GM12878 (cell line): ENCODE measurements at regions of chr14 and their contacts with region 1.

Region 1: DNA sequence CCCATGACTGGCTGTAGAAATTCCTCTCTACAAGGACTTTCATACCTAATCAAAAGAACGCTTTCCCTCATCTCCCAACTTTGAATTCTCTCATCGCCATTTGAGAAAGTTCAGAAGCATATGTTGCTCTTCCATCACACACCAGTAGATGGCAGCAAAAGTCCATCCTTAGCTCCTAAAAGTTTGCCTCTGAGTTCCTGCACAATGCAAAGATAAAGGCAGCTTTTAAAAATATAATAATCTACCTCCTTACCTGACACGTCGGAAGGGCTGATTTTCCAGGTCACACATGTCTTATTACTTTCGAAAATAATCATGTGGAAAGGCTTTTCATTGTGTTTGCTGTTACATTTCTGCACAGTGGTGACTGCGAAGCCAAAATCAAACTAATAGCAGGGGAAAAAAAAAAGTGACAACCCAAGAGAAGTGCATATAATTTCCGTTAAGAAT is 456.7 kb upstream of the SEL1L start:
- DNase-seq: peak; percentile 16
- ATAC-seq: peak; percentile 69
- H3K4me3 ChIP-seq: no peak overlapping the region
- H3K27ac ChIP-seq: no peak overlapping the region
- H3K4me1 ChIP-seq: no peaks in the 10 kb centered on the region
- H3K27me3 ChIP-seq: no peaks in the 10 kb centered on the region
- CTCF ChIP-seq: peak; percentile 78 to 85 (median 81)
- EP300 ChIP-seq: no peak
- POLR2A ChIP-seq: no peak
- RAD21 ChIP-seq: peak; percentile 95

Region 2: DNA sequence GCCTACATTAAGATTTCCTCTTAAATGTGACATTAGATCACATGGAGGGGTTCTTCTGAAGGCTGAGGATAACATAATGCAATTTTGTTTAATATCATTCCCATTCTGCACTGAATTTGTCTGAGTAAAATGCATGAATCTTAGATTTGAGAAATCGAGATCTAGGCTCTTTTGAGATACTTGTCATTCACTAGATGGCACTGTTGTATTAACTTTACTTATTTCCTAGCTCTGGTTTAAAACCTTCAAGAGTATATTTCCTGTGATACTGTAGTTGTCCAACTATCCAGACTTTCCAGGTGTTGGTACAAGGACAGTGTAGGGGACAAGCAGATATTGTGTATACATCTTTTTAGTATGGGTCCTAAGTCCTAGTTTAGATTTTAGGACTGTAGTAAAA is 365.0 kb before region 1 on chr14:
- CTCF ChIA-PET with region 1: interaction called, 21 read pairs
- POLR2A ChIA-PET with region 1: no interaction called
- RAD21 ChIA-PET with region 1: interaction called, 6 read pairs
- SMC1A ChIA-PET with region 1: interaction called, 11 read pairs
- in situ Hi-C with region 1: no loop called
- intact Hi-C with region 1: loop called (anchors 5 kb)
- DNase-seq: no peak
- ATAC-seq: peak; percentile 65; the same call in 2 of the 3 replicates
- H3K4me3 ChIP-seq: no peak overlapping the region
- H3K27ac ChIP-seq: no peak overlapping the region
- H3K4me1 ChIP-seq: no peaks in the 10 kb centered on the region
- H3K27me3 ChIP-seq: no peaks in the 10 kb centered on the region
- CTCF ChIP-seq: peak; percentile 23 to 54 (median 35); a peak in 4 of 6 replicates
- EP300 ChIP-seq: no peak
- POLR2A ChIP-seq: no peak
- RAD21 ChIP-seq: peak; percentile 40; the same call in 1 of the 2 replicates

Region 3: DNA sequence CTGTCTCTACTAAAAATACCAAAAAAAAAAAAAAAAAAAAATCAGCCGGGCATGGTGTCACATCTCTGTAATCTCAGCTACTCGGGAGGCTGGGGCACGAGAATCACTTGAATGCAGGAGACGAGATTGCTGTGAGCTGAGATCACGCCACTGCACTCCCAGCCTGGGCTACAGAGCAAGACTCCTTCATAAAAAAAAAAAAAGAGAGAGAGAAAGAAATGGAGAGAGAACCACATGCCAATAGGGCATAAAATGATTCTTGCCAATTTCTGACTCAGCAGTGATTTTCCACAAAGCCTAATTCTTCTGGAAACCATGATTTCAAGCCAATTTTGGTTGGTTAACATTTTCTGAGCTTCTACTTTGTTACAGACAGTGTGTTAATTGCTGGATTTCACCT is 206.3 kb before region 1 on chr14:
- CTCF ChIA-PET with region 1: no interaction called
- POLR2A ChIA-PET with region 1: no interaction called
- RAD21 ChIA-PET with region 1: no interaction called
- SMC1A ChIA-PET with region 1: no interaction called
- in situ Hi-C with region 1: no loop called
- intact Hi-C with region 1: no loop called
- DNase-seq: no peak
- ATAC-seq: no peak
- H3K4me3 ChIP-seq: no peak overlapping the region
- H3K27ac ChIP-seq: no peak overlapping the region
- H3K4me1 ChIP-seq: no peaks in the 10 kb centered on the region
- H3K27me3 ChIP-seq: no peaks in the 10 kb centered on the region
- CTCF ChIP-seq: no peak
- EP300 ChIP-seq: no peak
- POLR2A ChIP-seq: no peak
- RAD21 ChIP-seq: no peak

Region 4: DNA sequence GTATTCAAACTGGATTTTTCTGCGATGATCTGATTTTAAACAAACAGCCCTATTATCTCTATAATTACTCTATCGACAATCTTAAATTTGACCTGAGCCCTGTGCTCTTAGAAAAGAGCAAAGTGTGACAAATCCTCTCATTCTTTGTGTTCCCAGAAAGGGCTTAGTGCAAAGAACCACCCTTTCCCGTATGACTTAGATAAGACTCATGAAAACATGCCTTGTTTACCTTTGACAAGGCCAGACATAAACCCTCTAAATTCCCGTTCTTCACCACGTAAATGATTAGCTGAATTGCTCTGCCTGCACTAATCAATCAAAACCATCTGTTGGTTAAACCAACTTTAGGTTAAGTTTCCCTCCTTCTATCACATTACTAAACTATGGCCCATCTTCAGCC is 171.0 kb before region 1 on chr14:
- CTCF ChIA-PET with region 1: no interaction called
- POLR2A ChIA-PET with region 1: no interaction called
- RAD21 ChIA-PET with region 1: no interaction called
- SMC1A ChIA-PET with region 1: no interaction called
- in situ Hi-C with region 1: no loop called
- intact Hi-C with region 1: no loop called
- DNase-seq: no peak
- ATAC-seq: no peak
- H3K4me3 ChIP-seq: no peak overlapping the region
- H3K27ac ChIP-seq: no peak overlapping the region
- H3K4me1 ChIP-seq: no peaks in the 10 kb centered on the region
- H3K27me3 ChIP-seq: no peaks in the 10 kb centered on the region
- CTCF ChIP-seq: no peak
- EP300 ChIP-seq: no peak
- POLR2A ChIP-seq: no peak
- RAD21 ChIP-seq: no peak

Region 5: DNA sequence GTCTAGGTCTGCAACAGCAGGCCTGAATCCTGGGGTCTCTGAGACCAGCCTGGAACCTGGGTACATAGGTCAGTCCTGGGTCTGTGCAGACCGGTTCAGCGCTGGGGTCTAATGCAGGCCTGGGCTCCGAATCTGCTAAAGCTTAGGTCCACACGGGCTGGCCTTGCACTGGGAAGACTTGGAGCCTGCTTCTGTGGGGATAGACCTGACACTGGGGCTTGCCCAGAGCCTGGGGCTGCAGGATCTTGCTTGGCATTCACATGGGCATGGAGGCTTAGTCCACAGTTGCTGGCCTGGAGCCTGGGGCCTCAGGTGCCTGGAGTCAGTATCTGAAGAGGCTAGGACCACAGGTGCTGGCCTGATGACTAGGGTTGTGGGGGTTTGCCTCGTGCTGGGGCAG is 86.9 kb before region 1 on chr14:
- CTCF ChIA-PET with region 1: no interaction called
- POLR2A ChIA-PET with region 1: no interaction called
- RAD21 ChIA-PET with region 1: no interaction called
- SMC1A ChIA-PET with region 1: no interaction called
- in situ Hi-C with region 1: no loop called
- intact Hi-C with region 1: no loop called
- DNase-seq: no peak
- ATAC-seq: no peak
- H3K4me3 ChIP-seq: no peak overlapping the region
- H3K27ac ChIP-seq: no peak overlapping the region
- H3K4me1 ChIP-seq: no peaks in the 10 kb centered on the region
- H3K27me3 ChIP-seq: no peaks in the 10 kb centered on the region
- CTCF ChIP-seq: no peak
- EP300 ChIP-seq: no peak
- POLR2A ChIP-seq: no peak
- RAD21 ChIP-seq: no peak

Region 6: DNA sequence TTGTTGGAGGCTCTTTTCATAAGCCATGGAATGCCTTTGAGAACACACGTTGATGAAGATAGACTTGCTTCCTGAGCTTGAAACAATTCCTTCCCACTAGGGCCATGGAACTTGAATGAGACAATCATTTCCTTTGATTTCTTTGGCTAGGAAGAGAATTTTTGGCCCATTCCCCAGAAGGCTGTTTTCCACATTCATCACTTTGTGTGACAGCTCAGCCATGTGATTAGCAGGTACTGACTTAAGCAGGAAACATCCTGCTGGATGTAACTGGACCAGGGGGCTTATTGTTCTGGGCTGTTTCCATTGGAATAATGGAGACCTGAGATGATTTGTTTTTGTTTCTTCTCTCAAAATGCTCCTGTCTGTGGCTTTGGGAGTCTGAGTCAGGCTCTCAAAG is 13.1 kb after region 1 on chr14:
- CTCF ChIA-PET with region 1: interaction called, 12 read pairs
- POLR2A ChIA-PET with region 1: no interaction called
- RAD21 ChIA-PET with region 1: no interaction called
- SMC1A ChIA-PET with region 1: interaction called, 6 read pairs
- in situ Hi-C with region 1: no loop called
- intact Hi-C with region 1: no loop called
- DNase-seq: no peak
- ATAC-seq: no peak
- H3K4me3 ChIP-seq: no peak overlapping the region
- H3K27ac ChIP-seq: no peak overlapping the region
- H3K4me1 ChIP-seq: no peaks in the 10 kb centered on the region
- H3K27me3 ChIP-seq: no peaks in the 10 kb centered on the region
- CTCF ChIP-seq: no peak
- EP300 ChIP-seq: no peak
- POLR2A ChIP-seq: no peak
- RAD21 ChIP-seq: no peak

Region 7: DNA sequence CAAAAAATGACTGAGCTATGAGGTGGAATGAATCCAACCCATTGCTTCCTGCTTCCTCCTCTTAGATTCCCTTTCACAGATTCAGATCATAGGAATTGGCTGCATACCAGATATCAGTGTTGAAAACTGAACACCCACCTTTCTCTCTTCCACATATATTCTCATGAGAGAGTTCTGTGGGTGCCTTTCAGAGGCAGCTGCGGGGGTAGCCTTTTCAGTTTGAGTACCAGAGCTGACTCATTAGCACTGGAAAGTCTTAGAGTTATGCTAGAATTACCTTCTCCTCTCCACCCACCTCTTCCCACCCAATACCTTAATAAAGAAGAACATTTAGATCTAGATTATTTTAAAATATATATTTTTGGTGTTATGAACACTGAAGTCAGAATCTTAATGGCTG is 38.7 kb after region 1 on chr14:
- CTCF ChIA-PET with region 1: no interaction called
- POLR2A ChIA-PET with region 1: no interaction called
- RAD21 ChIA-PET with region 1: no interaction called
- SMC1A ChIA-PET with region 1: no interaction called
- in situ Hi-C with region 1: no loop called
- intact Hi-C with region 1: no loop called
- DNase-seq: no peak
- ATAC-seq: peak; percentile 59
- H3K4me3 ChIP-seq: no peak overlapping the region
- H3K27ac ChIP-seq: no peak overlapping the region
- H3K4me1 ChIP-seq: no peaks in the 10 kb centered on the region
- H3K27me3 ChIP-seq: no peaks in the 10 kb centered on the region
- CTCF ChIP-seq: no peak
- EP300 ChIP-seq: no peak
- POLR2A ChIP-seq: no peak
- RAD21 ChIP-seq: no peak

Region 8: DNA sequence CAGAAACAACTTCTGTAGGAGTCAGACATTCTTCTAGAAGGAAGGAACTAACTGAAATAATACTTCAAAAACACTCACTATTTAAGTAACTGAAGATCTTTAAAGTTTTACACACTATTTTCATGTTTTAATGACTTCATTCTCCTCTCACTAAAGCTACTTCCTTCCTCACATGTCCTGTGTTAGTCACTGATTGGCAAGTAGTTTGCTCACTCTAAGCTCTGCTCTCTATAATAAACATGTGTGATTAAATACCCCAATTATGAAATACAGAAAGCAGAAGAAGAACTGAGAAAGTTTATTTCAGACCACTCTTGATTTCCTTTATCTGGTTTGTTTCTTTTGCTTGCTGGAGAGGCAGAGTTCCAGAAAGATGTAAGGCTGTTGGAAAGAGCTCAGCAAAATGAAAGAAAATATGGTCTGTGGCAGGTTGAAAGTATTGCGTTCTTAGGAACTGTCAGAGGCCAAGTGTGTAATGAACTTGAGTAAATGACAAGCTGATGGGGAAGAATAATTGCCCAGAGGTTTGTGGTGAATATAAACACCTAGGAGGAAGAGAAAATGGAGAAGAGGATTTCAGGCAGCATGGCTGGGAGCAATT is 65.3 kb after region 1 on chr14:
- CTCF ChIA-PET with region 1: interaction called, 24 read pairs
- POLR2A ChIA-PET with region 1: interaction called, 6 read pairs
- RAD21 ChIA-PET with region 1: interaction called, 18 read pairs
- SMC1A ChIA-PET with region 1: interaction called, 10 read pairs
- in situ Hi-C with region 1: no loop called
- intact Hi-C with region 1: no loop called
- DNase-seq: no peak
- ATAC-seq: peak; percentile 79
- H3K4me3 ChIP-seq: no peak overlapping the region
- H3K27ac ChIP-seq: no peak overlapping the region
- H3K4me1 ChIP-seq: no peaks in the 10 kb centered on the region
- H3K27me3 ChIP-seq: no peaks in the 10 kb centered on the region
- CTCF ChIP-seq: no peak
- EP300 ChIP-seq: no peak
- POLR2A ChIP-seq: no peak
- RAD21 ChIP-seq: no peak

Region 9: GRCh38 chr14:82366803-82367202 is 376.5 kb after region 1 on chr14:
- CTCF ChIA-PET with region 1: interaction called, 8 read pairs
- POLR2A ChIA-PET with region 1: no interaction called
- RAD21 ChIA-PET with region 1: no interaction called
- SMC1A ChIA-PET with region 1: interaction called, 3 read pairs
- in situ Hi-C with region 1: no loop called
- intact Hi-C with region 1: loop called (anchors 10 kb)
- DNase-seq: no peak
- ATAC-seq: peak; percentile 39; the same call in 2 of the 3 replicates
- H3K4me3 ChIP-seq: no peak overlapping the region
- H3K27ac ChIP-seq: no peak overlapping the region
- H3K4me1 ChIP-seq: no peaks in the 10 kb centered on the region
- H3K27me3 ChIP-seq: no peaks in the 10 kb centered on the region
- CTCF ChIP-seq: no peak; a peak in 1 of 6 replicates
- EP300 ChIP-seq: no peak
- POLR2A ChIP-seq: no peak
- RAD21 ChIP-seq: no peak

Region 10: GRCh38 chr14:82872494-82872893 is 882.2 kb after region 1 on chr14:
- CTCF ChIA-PET with region 1: interaction called, 12 read pairs
- POLR2A ChIA-PET with region 1: no interaction called
- RAD21 ChIA-PET with region 1: no interaction called
- SMC1A ChIA-PET with region 1: interaction called, 3 read pairs
- in situ Hi-C with region 1: no loop called
- intact Hi-C with region 1: loop called (anchors 10 kb)
- DNase-seq: no peak
- ATAC-seq: peak; percentile 50; the same call in 2 of the 3 replicates
- H3K4me3 ChIP-seq: no peak overlapping the region
- H3K27ac ChIP-seq: no peak overlapping the region
- H3K4me1 ChIP-seq: no peaks in the 10 kb centered on the region
- H3K27me3 ChIP-seq: no peaks in the 10 kb centered on the region
- CTCF ChIP-seq: peak in 2 of 3 experiments; percentile 19 to 41; a peak in 3 of 6 replicates
- EP300 ChIP-seq: no peak
- POLR2A ChIP-seq: no peak
- RAD21 ChIP-seq: no peak

Region 11: DNA sequence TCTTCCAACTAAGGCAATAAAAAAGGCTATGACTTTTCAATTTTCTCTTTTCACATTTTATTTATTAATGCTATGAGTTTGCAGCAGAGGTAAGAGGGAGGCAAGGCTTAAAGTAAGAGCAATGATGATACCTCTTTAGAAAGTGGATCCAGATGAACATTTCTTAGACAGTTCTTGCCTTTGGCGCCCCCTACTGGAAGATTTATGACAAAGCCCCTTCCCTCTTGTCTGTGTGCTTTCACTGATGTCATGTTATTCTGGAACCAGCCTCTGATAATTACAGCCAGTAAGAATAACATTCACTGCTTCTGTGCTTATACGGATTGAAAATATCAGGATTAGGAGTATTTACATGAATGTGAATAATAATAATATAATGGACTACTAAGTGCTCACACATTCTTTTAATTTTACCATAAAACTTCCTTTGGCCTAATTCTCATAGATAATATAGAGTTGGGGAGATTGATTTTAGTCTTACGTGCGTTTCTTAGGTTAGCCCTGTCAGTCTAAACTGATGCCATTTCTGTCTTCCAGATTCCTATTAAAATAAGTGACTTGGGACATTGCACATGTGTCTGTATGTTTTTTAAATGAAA is 1473.3 kb after region 1 on chr14:
- CTCF ChIA-PET with region 1: no interaction called
- POLR2A ChIA-PET with region 1: no interaction called
- RAD21 ChIA-PET with region 1: no interaction called
- SMC1A ChIA-PET with region 1: no interaction called
- in situ Hi-C with region 1: loop called (anchors 25 kb)
- intact Hi-C with region 1: loop called (anchors 5 kb)
- DNase-seq: no peak
- ATAC-seq: peak; percentile 89
- H3K4me3 ChIP-seq: no peak overlapping the region
- H3K27ac ChIP-seq: no peak overlapping the region
- H3K4me1 ChIP-seq: no peaks in the 10 kb centered on the region
- H3K27me3 ChIP-seq: no peaks in the 10 kb centered on the region
- CTCF ChIP-seq: peak; percentile 45 to 62 (median 53)
- EP300 ChIP-seq: no peak
- POLR2A ChIP-seq: no peak
- RAD21 ChIP-seq: peak; percentile 53